ENCODE measurements at regions of chr3 and their contacts with region 1.

Region 1: DNA sequence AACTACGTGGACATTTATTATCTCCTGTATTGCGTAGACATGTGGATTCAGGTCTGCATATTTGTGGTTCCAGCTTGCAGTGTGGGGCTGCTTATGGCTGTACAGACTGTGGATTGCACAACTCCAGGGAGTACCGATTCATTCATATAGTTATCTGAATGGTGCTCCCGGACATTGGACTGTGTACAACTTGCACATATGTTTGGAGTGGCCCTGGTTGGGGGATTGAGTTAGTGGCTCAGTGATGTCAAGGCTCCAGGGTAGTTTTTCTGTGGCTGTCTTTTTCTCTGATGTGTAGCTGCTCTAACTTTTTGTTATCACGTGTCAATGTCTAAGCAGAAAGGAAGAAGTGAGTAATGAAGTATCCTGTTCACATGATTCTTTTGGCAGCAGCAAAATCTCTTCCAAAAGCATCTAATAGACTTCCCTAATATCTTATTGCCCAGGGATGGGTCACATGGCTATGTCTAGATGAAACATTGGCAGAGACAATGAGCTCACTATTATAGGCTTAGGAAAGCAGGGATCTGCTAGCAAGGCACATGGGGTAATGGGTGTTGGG is 15.8 kb downstream of the ST3GAL6 start:
- DNase-seq: peak; percentile 89
- H3K4me3 ChIP-seq: no peak overlapping the region
- CTCF ChIP-seq: no peak

Region 2: DNA sequence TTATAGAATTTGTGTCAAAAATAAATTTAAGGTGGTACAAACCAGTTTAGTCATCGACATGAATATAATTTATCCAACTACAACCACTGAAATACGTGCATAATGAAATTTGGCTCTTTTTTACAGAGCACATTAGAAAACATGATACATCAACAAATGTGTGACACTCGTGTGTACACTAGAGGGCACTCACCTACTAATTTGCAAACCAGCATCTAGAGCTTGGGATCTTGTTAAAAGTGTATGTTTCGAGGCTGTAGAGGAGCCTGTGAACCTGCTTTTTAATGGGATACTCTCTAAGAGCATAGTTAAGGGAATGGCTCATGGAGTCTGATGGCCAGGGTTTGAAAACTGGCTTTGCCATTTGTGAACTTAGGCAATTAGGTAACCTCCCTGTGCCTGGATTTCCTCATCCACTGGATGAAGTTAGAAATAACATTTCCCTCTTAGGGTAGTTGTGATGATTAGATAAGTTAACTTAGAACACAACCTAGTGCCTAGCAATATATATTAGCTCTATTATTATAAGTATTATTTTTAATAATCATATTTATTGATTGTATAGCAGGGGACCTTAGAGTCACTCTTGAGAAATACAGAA is 176.8 kb before region 1 on chr3:
- in situ Hi-C with region 1: loop called (anchors 25 kb)
- DNase-seq: peak; percentile 76
- H3K4me3 ChIP-seq: no peak overlapping the region
- CTCF ChIP-seq: peak; percentile 74

Region 3: DNA sequence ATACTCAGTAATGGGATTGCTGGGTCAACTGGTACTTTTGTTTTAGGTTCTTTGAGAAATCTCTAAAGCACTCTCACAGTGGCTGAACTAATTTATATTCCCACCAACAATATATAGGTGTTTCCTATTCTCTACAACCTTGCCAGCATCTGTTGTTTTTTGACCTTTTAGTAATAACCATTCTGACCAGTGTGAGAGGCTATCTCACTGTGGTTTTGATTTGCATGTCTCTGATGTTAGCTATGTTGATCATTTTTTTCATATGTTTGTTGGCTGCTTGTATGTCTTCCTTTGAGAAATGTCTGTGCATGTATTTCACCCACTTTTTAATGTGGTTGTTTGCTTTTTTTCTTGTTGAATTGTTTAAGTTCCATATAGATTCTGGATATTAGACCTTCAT is 220.7 kb after region 1 on chr3:
- in situ Hi-C with region 1: no loop called
- DNase-seq: no peak
- H3K4me3 ChIP-seq: no peak overlapping the region
- CTCF ChIP-seq: no peak

Measured in astrocyte of the spinal cord (primary cell).